ENCODE measurements at regions of chr15 and their contacts with region 1.

Region 1: GRCh38 chr15:44195151-44195740 is at the start of gene FRMD5:
- DNase-seq: peak; percentile 99
- H3K4me3 ChIP-seq: peak within 1 kb of the TSS; percentile 75 to 84 (median 76)
- H3K27ac ChIP-seq: peak within 1 kb of the TSS; percentile 82
- H3K4me1 ChIP-seq: peaks cover 19% of the 10 kb centered on the region
- H3K27me3 ChIP-seq: no peaks in the 10 kb centered on the region
- CTCF ChIP-seq: peak in 1 of 2 donors; percentile 51
- total RNA-seq, gene FRMD5: 12.5 to 17.5 TPM

Region 2: DNA sequence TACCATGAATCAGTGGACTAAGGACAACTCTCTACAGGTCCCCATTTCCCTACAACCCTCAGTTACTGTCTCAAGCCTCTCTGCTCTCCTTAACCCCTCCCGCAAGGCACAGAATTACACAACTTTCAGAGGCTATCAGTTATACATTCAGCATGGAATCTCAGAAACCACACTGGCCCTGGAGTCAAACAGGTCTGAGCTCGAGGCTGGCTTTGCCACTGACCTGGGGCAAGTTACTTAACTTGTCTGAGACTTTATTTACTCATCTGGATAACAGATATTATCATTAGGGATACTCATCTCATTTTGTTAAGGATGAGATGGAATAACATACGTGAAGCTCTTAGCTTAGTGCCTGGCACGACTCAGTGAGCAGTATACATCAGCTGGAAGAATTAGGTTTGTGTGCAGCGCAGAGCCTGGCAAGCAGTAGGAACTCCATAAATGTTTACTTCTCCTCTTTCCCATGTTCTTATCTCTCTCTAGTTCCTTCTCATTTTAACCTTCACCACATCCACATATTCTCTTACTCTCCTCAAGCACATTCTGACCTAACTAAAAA is 273.1 kb before region 1 on chr15:
- CTCF ChIA-PET with region 1: interaction called, 12 read pairs
- dilution Hi-C with region 1: no loop called
- in situ Hi-C with region 1: no loop called
- intact Hi-C with region 1: no loop called
- DNase-seq: peak; percentile 72
- H3K4me3 ChIP-seq: no peak overlapping the region
- H3K27ac ChIP-seq: no peak overlapping the region
- H3K4me1 ChIP-seq: peaks cover 18% of the 10 kb centered on the region
- H3K27me3 ChIP-seq: no peaks in the 10 kb centered on the region
- CTCF ChIP-seq: no peak

Region 3: GRCh38 chr15:44066316-44066740 is 128.9 kb before region 1 on chr15:
- CTCF ChIA-PET with region 1: no interaction called
- dilution Hi-C with region 1: no loop called
- in situ Hi-C with region 1: loop called in 1 of 2 experiments (anchors 10 kb)
- intact Hi-C with region 1: loop called (anchors 2 kb)
- DNase-seq: peak; percentile 65
- H3K4me3 ChIP-seq: no peak overlapping the region
- H3K27ac ChIP-seq: peak overlapping the region; percentile 31
- H3K4me1 ChIP-seq: peaks cover 9% of the 10 kb centered on the region
- H3K27me3 ChIP-seq: no peaks in the 10 kb centered on the region
- CTCF ChIP-seq: peak; percentile 72 to 80

Region 4: DNA sequence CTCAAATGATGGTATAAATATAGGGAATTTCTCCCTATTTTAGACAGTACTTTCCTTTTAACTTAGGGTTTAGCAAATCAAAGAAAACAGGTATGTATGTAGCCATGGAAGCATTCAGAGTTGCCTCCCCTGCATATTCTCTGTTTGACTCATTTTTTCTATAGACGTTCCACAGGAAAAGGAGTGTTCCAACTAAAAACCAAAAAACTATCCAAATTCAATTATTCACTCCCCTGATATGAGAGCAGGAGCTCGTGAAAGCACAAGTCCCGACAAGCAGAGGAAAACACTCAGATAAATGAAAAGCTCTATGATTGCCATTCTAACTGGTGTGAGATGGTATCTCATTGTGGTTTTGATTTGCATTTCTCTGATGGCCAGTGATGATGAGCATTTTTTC is 119.7 kb before region 1 on chr15:
- CTCF ChIA-PET with region 1: no interaction called
- dilution Hi-C with region 1: no loop called
- in situ Hi-C with region 1: no loop called
- intact Hi-C with region 1: loop called (anchors 1 kb)
- DNase-seq: peak; percentile 94
- H3K4me3 ChIP-seq: peak overlapping the region in 1 of 3 experiments; percentile 17
- H3K27ac ChIP-seq: peak overlapping the region; percentile 99
- H3K4me1 ChIP-seq: peaks cover 20% of the 10 kb centered on the region
- H3K27me3 ChIP-seq: no peaks in the 10 kb centered on the region
- CTCF ChIP-seq: no peak

Region 5: DNA sequence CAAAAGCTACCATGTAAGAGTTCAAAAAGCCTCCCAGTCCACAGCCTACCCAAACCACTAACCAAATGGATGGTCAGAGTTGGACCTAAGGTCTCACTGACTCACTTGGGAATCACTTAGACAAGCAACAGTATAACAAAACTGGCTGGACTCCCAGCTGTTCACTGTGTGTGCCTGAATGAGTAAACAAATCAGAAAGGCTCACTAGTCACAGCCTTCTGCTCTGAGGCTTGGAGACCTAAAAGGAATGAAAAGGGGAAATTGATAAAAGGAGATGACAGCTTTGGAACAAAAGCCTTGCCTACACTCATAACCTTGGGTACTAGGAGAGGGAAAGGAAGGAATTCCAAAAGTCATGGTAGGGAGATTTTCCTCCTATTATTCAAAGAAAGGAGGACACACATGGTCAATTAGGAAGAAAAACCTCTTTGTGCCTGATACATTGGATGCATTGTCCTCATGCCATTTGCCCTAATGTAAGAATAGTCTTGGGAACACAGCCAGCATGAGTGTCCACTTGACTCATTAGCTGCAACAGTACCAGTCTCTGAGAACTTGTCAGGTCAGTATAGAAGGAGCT is 92.5 kb before region 1 on chr15:
- CTCF ChIA-PET with region 1: no interaction called
- dilution Hi-C with region 1: no loop called
- in situ Hi-C with region 1: no loop called
- intact Hi-C with region 1: loop called (anchors 1 kb)
- DNase-seq: peak; percentile 94
- H3K4me3 ChIP-seq: no peak overlapping the region
- H3K27ac ChIP-seq: peak overlapping the region; percentile 96
- H3K4me1 ChIP-seq: peaks cover 39% of the 10 kb centered on the region
- H3K27me3 ChIP-seq: no peaks in the 10 kb centered on the region
- CTCF ChIP-seq: no peak

Region 6: GRCh38 chr15:44130778-44131177 is 64.5 kb before region 1 on chr15:
- CTCF ChIA-PET with region 1: no interaction called
- dilution Hi-C with region 1: no loop called
- in situ Hi-C with region 1: no loop called
- intact Hi-C with region 1: no loop called
- DNase-seq: no peak
- H3K4me3 ChIP-seq: no peak overlapping the region
- H3K27ac ChIP-seq: no peak overlapping the region
- H3K4me1 ChIP-seq: no peaks in the 10 kb centered on the region
- H3K27me3 ChIP-seq: no peaks in the 10 kb centered on the region
- CTCF ChIP-seq: peak in 1 of 2 donors; percentile 22

Region 7: DNA sequence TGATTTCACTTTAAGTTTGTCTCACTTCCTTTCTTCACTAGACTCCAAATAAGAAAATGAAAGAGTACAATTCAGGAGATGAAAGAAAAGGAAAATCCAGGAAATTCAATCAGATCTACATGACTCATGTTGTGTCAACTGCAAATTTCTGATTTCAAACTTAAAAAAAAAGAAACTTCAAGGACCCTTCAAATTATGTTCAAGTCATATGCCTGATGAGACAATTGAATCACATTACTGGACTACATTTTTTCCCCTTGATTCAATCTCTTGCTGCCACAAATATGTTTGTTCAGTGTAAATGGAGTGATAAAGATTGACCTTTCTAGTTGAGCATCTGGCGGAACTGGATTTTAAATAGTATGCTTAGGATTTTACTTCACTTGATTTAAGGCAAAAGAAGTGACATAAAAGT is 37.6 kb before region 1 on chr15:
- CTCF ChIA-PET with region 1: interaction called, 5 read pairs
- dilution Hi-C with region 1: no loop called
- in situ Hi-C with region 1: no loop called
- intact Hi-C with region 1: loop called (anchors 5 kb)
- DNase-seq: peak; percentile 85
- H3K4me3 ChIP-seq: no peak overlapping the region
- H3K27ac ChIP-seq: peak overlapping the region; percentile 57
- H3K4me1 ChIP-seq: peaks cover 25% of the 10 kb centered on the region
- H3K27me3 ChIP-seq: no peaks in the 10 kb centered on the region
- CTCF ChIP-seq: no peak

Region 8: GRCh38 chr15:44177139-44177538 is 18.1 kb before region 1 on chr15:
- CTCF ChIA-PET with region 1: no interaction called
- dilution Hi-C with region 1: no loop called
- in situ Hi-C with region 1: no loop called
- intact Hi-C with region 1: loop called (anchors 2 kb)
- DNase-seq: peak; percentile 15
- H3K4me3 ChIP-seq: no peak overlapping the region
- H3K27ac ChIP-seq: no peak overlapping the region
- H3K4me1 ChIP-seq: peaks cover 3% of the 10 kb centered on the region
- H3K27me3 ChIP-seq: no peaks in the 10 kb centered on the region
- CTCF ChIP-seq: no peak

Region 9: DNA sequence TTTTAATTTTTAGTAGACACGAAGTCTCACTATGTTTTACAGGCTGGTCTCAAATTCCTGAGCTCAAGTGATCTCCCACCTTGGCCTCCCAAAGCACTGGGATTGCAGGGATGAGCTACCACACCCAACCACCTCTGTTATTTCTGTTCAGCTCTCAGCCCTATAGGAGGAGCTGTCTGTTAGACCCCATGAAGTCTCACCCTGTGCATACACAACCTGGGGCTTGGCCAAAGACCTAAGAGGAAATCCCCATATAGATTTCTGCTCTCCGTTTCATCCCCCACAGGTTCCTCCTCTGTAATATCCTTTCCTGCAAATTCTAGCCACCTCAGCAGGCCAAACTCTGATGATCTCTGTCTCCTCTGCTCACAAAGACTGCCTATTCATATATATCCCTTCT is 175.6 kb after region 1 on chr15:
- CTCF ChIA-PET with region 1: no interaction called
- dilution Hi-C with region 1: no loop called
- in situ Hi-C with region 1: no loop called
- intact Hi-C with region 1: no loop called
- DNase-seq: no peak
- H3K4me3 ChIP-seq: no peak overlapping the region
- H3K27ac ChIP-seq: no peak overlapping the region
- H3K4me1 ChIP-seq: no peaks in the 10 kb centered on the region
- H3K27me3 ChIP-seq: no peaks in the 10 kb centered on the region
- CTCF ChIP-seq: no peak

Measured in mammary epithelial cell (primary cell).